ENCODE measurements at regions of chr9 and their contacts with region 1.

Region 1: DNA sequence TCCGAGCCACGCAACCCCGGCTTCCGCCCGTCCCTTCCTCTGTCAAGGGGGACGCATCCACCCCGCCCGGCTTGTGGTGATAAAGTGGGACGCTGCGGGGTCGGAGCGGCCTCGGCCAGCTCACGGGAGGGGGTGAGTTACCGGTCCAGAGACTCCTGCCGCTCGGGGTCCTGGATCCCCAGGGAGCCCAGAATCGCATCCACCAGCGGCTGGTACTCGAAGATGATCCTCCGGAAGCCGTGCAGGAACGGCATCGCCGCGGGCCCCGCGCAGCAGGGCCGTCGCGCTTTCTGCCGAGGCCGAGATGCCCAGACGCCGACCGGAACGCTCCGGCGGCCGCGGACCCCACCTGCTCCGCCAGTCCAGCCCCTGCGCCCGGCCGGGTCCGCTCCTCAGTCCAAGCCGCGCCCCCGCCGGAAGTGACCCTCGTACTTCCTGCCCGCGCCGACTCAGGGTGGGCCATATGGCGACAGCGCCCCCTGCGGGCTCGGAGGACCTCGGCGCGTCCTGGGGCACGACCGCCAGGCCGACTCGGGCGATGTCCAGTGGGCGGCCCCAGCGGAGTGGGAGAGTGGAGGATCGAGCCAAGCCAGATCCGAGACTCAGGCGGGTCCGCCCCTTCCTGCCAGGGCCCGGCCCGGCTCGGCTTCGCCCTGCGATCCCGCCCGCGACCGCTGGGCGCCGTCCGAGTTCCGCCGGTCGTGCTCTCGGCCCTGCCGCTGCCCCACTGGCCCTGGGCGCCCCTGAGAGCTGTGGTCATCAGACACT is at the start of gene ASB6:
- DNase-seq: peak; percentile 97
- H3K4me3 Mint-ChIP-seq: peak within 1 kb of the TSS; percentile 83
- H3K27ac Mint-ChIP-seq: no peak within 1 kb of the TSS
- H3K4me1 Mint-ChIP-seq: no peaks in the 10 kb centered on the region
- H3K27me3 Mint-ChIP-seq: no peaks in the 10 kb centered on the region
- CTCF ChIP-seq: peak; percentile 90
- total RNA-seq, gene ASB6: 15.5 and 18.4 TPM in 2 replicates

Region 2: GRCh38 chr9:129609486-129610192 is 32.3 kb before region 1 on chr9:
- CTCF ChIA-PET with region 1: no interaction called
- intact Hi-C with region 1: no loop called
- DNase-seq: peak; percentile 70
- H3K4me3 Mint-ChIP-seq: peak overlapping the region; percentile 79
- H3K27ac Mint-ChIP-seq: peak overlapping the region; percentile 88
- H3K4me1 Mint-ChIP-seq: peaks cover 21% of the 10 kb centered on the region
- H3K27me3 Mint-ChIP-seq: no peaks in the 10 kb centered on the region
- CTCF ChIP-seq: no peak

Region 3: GRCh38 chr9:129794549-129794948 is 152.6 kb after region 1 on chr9:
- CTCF ChIA-PET with region 1: interaction called, 3 read pairs
- intact Hi-C with region 1: loop called (anchors 5 kb)
- DNase-seq: no peak
- H3K4me3 Mint-ChIP-seq: no peak overlapping the region
- H3K27ac Mint-ChIP-seq: no peak overlapping the region
- H3K4me1 Mint-ChIP-seq: no peaks in the 10 kb centered on the region
- H3K27me3 Mint-ChIP-seq: peaks cover 20% of the 10 kb centered on the region
- CTCF ChIP-seq: no peak

Measured in Calu3 (cell line).